Mammary epithelial cell (primary cell): ENCODE measurements at regions of chr14 and their contacts with region 1.

Region 1: GRCh38 chr14:39102969-39103957 is at the start of gene SEC23A:
- DNase-seq: peak; percentile 81
- H3K4me3 ChIP-seq: peak within 1 kb of the TSS; percentile 80 to 95 (median 91)
- H3K27ac ChIP-seq: peak within 1 kb of the TSS; percentile 64
- H3K4me1 ChIP-seq: peaks cover 4% of the 10 kb centered on the region
- H3K27me3 ChIP-seq: no peaks in the 10 kb centered on the region
- CTCF ChIP-seq: peak in 1 of 2 donors; percentile 3
- total RNA-seq, gene SEC23A: 97.6 to 169 TPM

Region 2: DNA sequence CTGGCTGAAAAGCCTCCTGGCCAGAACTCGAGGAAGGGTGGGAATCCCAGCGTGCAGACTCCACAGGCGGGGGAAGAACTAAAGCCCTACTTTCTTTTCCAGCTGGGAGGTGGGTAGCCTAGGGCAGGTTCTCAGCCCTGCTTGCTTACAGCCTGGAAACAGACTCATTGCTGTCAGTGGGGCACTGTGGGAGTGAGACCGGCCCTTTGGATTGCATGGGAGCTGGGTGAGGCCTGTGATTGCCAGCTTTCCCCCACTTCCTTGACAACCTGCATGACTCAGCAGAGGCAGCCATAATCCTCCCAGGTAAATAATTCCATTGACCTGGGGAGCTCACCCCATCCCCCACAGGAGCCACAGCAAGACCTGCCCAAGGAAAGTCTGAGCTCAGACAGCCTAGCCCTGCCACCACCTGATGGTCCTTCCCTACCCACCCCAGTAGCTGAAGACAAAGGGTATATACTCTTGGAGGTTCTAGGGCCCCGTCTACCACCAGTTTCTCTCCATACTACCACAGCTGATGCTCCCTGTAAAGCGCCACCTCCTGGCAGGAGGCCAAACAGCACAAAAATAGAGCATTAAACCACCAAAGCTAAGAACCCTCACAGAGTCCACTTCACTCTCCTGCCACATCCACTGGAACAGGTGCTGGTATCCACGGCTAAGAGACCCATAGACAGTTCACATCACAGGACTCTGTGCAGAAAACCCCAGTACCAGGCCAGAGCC is 294.4 kb before region 1 on chr14:
- CTCF ChIA-PET with region 1: no interaction called
- dilution Hi-C with region 1: no loop called
- in situ Hi-C with region 1: no loop called
- intact Hi-C with region 1: no loop called
- DNase-seq: peak; percentile 21
- H3K4me3 ChIP-seq: no peak overlapping the region
- H3K27ac ChIP-seq: no peak overlapping the region
- H3K4me1 ChIP-seq: no peaks in the 10 kb centered on the region
- H3K27me3 ChIP-seq: no peaks in the 10 kb centered on the region
- CTCF ChIP-seq: no peak

Region 3: DNA sequence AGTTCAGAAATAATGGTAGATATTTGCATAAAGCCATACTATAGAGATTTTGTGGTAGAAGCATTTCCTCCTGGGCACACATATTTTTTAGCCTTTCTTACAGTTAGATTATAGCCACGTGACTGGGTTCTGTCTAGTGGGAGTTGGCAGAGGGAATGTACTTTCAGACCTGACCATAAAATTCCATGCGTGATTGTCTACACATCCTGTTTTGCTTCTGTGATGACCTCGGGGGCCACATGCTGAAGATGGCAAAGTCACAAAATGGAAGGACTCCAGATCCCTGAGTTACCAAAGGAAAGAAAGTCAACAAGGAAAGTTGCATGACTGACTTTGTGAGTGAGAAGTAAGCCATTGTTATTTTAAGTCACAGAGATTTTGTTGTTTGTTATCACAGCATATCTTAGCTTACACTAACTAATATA is 115.8 kb after region 1 on chr14:
- CTCF ChIA-PET with region 1: no interaction called
- dilution Hi-C with region 1: no loop called
- in situ Hi-C with region 1: no loop called
- intact Hi-C with region 1: loop called (anchors 2 kb)
- DNase-seq: no peak
- H3K4me3 ChIP-seq: no peak overlapping the region
- H3K27ac ChIP-seq: no peak overlapping the region
- H3K4me1 ChIP-seq: peaks cover 17% of the 10 kb centered on the region
- H3K27me3 ChIP-seq: no peaks in the 10 kb centered on the region
- CTCF ChIP-seq: no peak

Region 4: GRCh38 chr14:39368261-39368959 is 265.1 kb after region 1 on chr14:
- CTCF ChIA-PET with region 1: no interaction called
- dilution Hi-C with region 1: no loop called
- in situ Hi-C with region 1: no loop called
- intact Hi-C with region 1: loop called (anchors 5 kb)
- DNase-seq: peak; percentile 36
- H3K4me3 ChIP-seq: no peak overlapping the region
- H3K27ac ChIP-seq: no peak overlapping the region
- H3K4me1 ChIP-seq: no peaks in the 10 kb centered on the region
- H3K27me3 ChIP-seq: no peaks in the 10 kb centered on the region
- CTCF ChIP-seq: peak; percentile 41 to 50

Region 5: GRCh38 chr14:39417014-39417413 is 313.8 kb after region 1 on chr14:
- CTCF ChIA-PET with region 1: no interaction called
- dilution Hi-C with region 1: no loop called
- in situ Hi-C with region 1: loop called (anchors 10 kb)
- intact Hi-C with region 1: loop called (anchors 1 kb)
- DNase-seq: peak; percentile 21
- H3K4me3 ChIP-seq: no peak overlapping the region
- H3K27ac ChIP-seq: no peak overlapping the region
- H3K4me1 ChIP-seq: no peaks in the 10 kb centered on the region
- H3K27me3 ChIP-seq: no peaks in the 10 kb centered on the region
- CTCF ChIP-seq: peak; percentile 52 to 60

Region 6: GRCh38 chr14:39426605-39427004 is 323.3 kb after region 1 on chr14:
- CTCF ChIA-PET with region 1: interaction called, 5 read pairs
- dilution Hi-C with region 1: no loop called
- in situ Hi-C with region 1: loop called in 1 of 2 experiments (anchors 10 kb)
- intact Hi-C with region 1: loop called (anchors 1 kb)
- DNase-seq: peak; percentile 31
- H3K4me3 ChIP-seq: no peak overlapping the region
- H3K27ac ChIP-seq: no peak overlapping the region
- H3K4me1 ChIP-seq: peaks cover 16% of the 10 kb centered on the region
- H3K27me3 ChIP-seq: no peaks in the 10 kb centered on the region
- CTCF ChIP-seq: peak in 1 of 2 donors; percentile 35

Region 7: DNA sequence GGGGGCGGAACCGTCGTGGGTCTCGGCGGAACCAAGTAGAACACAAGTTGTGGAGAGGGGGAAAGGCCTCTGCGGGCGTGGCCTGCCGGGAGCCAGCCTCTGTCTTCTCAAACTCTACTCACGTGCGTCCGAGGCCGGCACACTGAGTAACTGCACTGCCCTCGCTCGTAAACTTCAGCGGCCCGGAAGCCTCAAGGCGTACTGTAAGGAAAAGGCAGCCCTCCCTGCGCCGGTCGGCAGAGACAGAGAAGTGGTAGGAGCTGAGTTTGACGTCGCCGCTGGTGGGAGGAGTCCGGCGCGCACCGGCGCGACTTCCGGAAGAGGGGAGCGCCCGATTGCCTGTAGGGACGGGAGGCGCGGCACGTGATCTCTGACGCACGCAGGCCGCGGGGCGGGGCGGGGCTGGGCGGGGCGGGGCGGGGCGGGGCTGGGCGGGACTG is 328.9 kb after region 1 on chr14 and contains the start of gene FBXO33:
- CTCF ChIA-PET with region 1: interaction called, 3 read pairs
- dilution Hi-C with region 1: no loop called
- in situ Hi-C with region 1: loop called in 1 of 2 experiments (anchors 10 kb)
- intact Hi-C with region 1: loop called (anchors 1 kb)
- DNase-seq: peak; percentile 95
- H3K4me3 ChIP-seq: peak within 1 kb of the TSS; percentile 95 to 98 (median 96)
- H3K27ac ChIP-seq: peak within 1 kb of the TSS; percentile 99
- H3K4me1 ChIP-seq: peaks cover 17% of the 10 kb centered on the region
- H3K27me3 ChIP-seq: no peaks in the 10 kb centered on the region
- CTCF ChIP-seq: no peak
- total RNA-seq, gene FBXO33: 6.0 to 13.2 TPM